Activated naive CD4-positive, alpha-beta T cell treated with anti-CD3 and anti-CD28 coated beads for 36 hours (primary cell): ENCODE measurements at regions of chr6 and their contacts with region 1.

Region 1: DNA sequence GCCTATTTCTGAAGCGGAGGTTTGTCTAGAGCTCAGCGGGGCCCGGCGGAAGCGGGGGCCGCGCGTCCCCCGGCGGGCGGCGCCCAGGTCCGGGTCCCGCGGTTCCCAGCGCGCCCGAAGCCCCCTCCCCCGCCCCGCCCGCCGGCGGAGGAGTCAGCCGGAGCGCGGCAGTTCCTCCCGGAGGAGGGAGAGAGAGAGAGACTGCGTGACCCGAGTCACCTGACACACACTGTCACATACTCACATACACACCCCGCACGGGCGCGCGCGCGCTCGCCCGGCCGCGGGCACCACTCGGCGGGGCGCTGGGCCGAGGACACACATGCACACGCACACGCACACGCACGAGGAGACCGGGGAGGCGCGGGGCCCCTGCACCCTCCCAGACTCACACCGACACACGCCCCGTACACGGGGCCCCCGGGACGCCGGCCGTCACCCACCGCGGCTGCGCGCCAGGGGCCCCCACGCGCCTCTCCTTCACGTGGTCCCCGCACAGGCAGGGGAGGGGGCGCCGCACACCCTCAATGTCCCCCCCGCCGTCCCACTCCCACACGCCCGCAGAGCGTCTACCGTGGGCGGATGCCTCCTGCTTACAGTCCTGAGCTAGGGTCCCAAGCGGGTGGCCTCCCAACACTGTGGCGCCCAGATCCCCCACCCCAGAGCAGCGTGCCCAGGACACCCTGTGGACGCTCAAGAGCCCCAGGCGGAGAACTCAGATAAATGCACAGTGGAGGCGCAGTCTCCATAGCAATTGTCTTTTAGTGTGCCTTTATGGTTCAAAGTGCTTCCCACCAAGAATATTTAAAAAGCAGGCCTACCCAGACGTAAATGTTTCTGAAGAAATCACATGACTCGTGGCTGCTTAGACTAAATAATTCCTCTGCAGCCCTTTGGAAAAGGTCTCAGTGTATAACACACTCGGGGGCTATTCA is at the start of gene RRAGD:
- DNase-seq: peak; percentile 67
- H3K4me3 Mint-ChIP-seq: peak within 1 kb of the TSS; percentile 91
- H3K27ac Mint-ChIP-seq: peak within 1 kb of the TSS; percentile 31
- H3K4me1 Mint-ChIP-seq: peaks cover 23% of the 10 kb centered on the region
- H3K27me3 Mint-ChIP-seq: peaks cover 4% of the 10 kb centered on the region
- total RNA-seq, gene RRAGD: 11.3 to 13.2 TPM

Region 2: DNA sequence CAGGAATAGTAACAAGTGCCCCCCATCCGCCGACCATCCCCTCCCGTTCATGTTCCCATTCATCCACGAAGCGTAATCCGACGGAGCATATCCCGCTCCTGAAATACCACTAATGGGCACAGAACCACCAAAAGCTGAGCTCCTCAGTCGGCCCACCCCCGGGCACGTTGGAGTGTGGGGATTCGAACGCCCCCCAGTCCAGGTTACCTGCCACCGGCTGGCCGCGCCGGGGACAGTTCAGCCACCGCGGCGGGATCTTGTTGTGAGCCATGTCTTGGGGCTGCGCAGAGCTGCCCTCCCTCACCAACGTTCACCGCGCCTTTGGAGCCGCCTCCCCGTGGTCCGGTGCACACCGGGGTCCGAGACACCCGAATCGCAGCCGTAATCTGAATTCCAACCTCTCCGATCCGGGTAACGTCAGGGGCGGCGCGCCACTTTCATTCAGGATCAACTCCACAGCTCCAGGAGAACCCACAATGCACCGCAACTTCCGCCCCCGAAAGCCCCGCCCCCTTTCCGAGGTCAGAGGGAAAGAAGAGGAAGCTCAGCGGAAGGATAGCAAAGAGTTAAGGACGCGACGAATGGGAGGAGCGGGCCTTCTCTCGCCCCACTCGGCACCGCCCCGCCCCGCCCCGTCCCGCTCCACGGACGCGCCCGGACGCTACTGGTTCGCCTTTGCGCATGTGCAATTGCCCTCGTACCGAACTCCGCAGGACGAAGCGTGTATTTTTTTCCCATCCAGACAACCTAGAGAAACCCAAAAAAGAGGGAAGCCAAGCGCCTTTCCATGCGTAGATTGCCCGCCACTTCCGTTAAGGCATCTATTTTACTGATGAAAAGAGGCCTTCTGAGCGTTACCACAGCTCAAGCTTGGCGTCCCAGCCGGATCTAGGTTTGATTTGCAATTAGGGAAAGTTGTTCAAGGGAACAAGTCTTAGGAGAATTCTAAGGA is 448.9 kb before region 1 on chr6 and contains the start of gene RNGTT:
- CTCF ChIA-PET with region 1: no interaction called
- intact Hi-C with region 1: loop called (anchors 2 kb)
- DNase-seq: peak; percentile 99
- H3K4me3 Mint-ChIP-seq: peak within 1 kb of the TSS; percentile 99
- H3K27ac Mint-ChIP-seq: peak within 1 kb of the TSS; percentile 87
- H3K4me1 Mint-ChIP-seq: peaks cover 34% of the 10 kb centered on the region
- H3K27me3 Mint-ChIP-seq: no peaks in the 10 kb centered on the region
- total RNA-seq, gene RNGTT: 21.7 to 23.5 TPM

Region 3: GRCh38 chr6:89297695-89298351 is 114.5 kb before region 1 on chr6:
- CTCF ChIA-PET with region 1: no interaction called
- intact Hi-C with region 1: loop called (anchors 5 kb)
- DNase-seq: peak; percentile 83
- H3K4me3 Mint-ChIP-seq: peak overlapping the region; percentile 7
- H3K27ac Mint-ChIP-seq: peak overlapping the region; percentile 46
- H3K4me1 Mint-ChIP-seq: peaks cover 18% of the 10 kb centered on the region
- H3K27me3 Mint-ChIP-seq: no peaks in the 10 kb centered on the region

Region 4: DNA sequence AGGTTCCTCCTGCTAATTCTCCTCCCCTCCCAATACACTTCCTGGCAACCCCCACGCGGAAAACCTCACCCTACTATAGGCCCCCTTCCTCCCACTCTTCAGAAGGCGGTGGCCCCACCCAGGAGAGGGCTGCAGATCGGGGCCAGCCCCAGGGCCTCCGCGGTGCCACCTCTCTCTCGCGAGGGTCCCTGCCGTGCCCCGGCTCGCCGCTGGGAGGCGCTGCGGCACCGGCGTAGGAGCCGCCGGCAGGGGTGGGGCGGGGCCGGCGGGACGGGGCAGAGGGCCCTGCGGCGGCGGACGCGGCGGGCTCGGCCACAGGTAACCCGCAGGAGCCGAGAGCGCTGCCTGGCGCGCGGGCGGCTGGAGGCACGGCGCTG is 20.5 kb after region 1 on chr6 and contains the start of gene ANKRD6:
- CTCF ChIA-PET with region 1: interaction called, 26 read pairs
- intact Hi-C with region 1: loop called (anchors 1 kb)
- DNase-seq: peak; percentile 77
- H3K4me3 Mint-ChIP-seq: peak within 1 kb of the TSS; percentile 69
- H3K27ac Mint-ChIP-seq: no peak within 1 kb of the TSS
- H3K4me1 Mint-ChIP-seq: peaks cover 10% of the 10 kb centered on the region
- H3K27me3 Mint-ChIP-seq: no peaks in the 10 kb centered on the region
- total RNA-seq, gene ANKRD6: 1.5 to 1.6 TPM

Region 5: DNA sequence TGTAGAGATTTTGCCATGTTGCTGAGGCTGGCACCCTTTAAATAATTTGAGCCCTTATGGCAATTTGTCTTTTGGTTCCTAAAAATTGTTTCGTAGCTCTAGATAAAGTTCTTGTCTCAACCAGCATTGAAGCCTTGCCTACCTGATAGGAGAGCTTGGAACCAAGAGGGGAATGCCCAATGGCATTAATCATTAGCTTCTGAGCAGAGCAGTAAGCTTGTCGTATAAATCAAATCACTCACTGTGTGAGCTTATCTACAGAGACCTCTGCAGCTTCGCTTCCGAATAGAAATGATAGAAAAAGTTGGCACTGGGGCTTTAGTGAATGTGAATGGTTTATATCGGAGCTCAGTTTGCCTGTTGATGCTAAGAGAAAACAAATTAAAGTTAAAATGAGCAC is 31.3 kb after region 1 on chr6:
- CTCF ChIA-PET with region 1: no interaction called
- intact Hi-C with region 1: no loop called
- DNase-seq: no peak
- H3K4me3 Mint-ChIP-seq: no peak overlapping the region
- H3K27ac Mint-ChIP-seq: no peak overlapping the region
- H3K4me1 Mint-ChIP-seq: no peaks in the 10 kb centered on the region
- H3K27me3 Mint-ChIP-seq: no peaks in the 10 kb centered on the region

Region 6: GRCh38 chr6:89458704-89459103 is 46.4 kb after region 1 on chr6:
- CTCF ChIA-PET with region 1: no interaction called
- intact Hi-C with region 1: no loop called
- DNase-seq: no peak
- H3K4me3 Mint-ChIP-seq: no peak overlapping the region
- H3K27ac Mint-ChIP-seq: no peak overlapping the region
- H3K4me1 Mint-ChIP-seq: no peaks in the 10 kb centered on the region
- H3K27me3 Mint-ChIP-seq: no peaks in the 10 kb centered on the region

Region 7: DNA sequence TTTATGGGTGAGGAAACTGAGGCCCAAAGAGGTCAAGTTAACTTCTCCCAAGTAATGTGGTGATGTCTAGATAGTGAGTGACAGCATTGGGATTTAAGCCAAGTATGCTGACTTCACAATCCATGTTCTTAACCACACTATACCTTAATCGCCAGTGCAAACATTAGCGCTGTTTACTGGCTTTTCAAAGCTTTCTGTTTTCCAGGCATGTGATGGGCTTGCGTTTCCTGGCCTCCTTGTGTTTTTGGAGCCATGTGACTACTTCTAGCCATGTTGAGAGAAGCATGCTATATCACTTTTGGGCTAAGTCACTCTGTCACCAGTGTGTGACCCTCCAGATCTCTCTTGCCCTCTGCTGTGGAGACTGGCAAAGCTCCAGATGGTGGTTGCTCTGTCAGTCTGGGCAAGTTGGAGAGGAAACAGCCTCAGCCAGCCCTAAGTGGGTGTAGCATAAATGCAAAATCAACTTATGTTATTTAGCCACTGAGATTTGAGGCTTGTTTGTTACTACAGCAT is 97.5 kb after region 1 on chr6:
- CTCF ChIA-PET with region 1: no interaction called
- intact Hi-C with region 1: no loop called
- DNase-seq: no peak
- H3K4me3 Mint-ChIP-seq: no peak overlapping the region
- H3K27ac Mint-ChIP-seq: no peak overlapping the region
- H3K4me1 Mint-ChIP-seq: no peaks in the 10 kb centered on the region
- H3K27me3 Mint-ChIP-seq: no peaks in the 10 kb centered on the region